Mucosa of descending colon (tissue), 3 donors: ENCODE measurements at regions of chr9 and their contacts with region 1.

Region 1: GRCh38 chr9:102101723-102102122 is 363.3 kb upstream of the GRIN3A start:
- DNase-seq: no peak
- ATAC-seq: no peak
- H3K4me3 ChIP-seq: no peak overlapping the region
- H3K4me1 ChIP-seq: no peaks in the 10 kb centered on the region
- CTCF ChIP-seq: no peak

Region 2: GRCh38 chr9:101848485-101848919 is 253.2 kb before region 1 on chr9:
- intact Hi-C with region 1: no loop called
- DNase-seq: peak in 1 of 3 donors; percentile 68
- ATAC-seq: peak; percentile 70
- H3K4me3 ChIP-seq: no peak overlapping the region
- H3K4me1 ChIP-seq: peaks cover 21% of the 10 kb centered on the region
- CTCF ChIP-seq: no peak

Region 3: GRCh38 chr9:102049586-102050246 is 52.0 kb before region 1 on chr9:
- intact Hi-C with region 1: loop called in 1 of 2 experiments (anchors 10 kb)
- DNase-seq: no peak
- ATAC-seq: no peak
- H3K4me3 ChIP-seq: no peak overlapping the region
- H3K4me1 ChIP-seq: no peaks in the 10 kb centered on the region
- CTCF ChIP-seq: no peak